Naive thymus-derived CD4-positive, alpha-beta T cell (primary cell): ENCODE measurements at regions of chr13 and their contacts with region 1.

Region 1: DNA sequence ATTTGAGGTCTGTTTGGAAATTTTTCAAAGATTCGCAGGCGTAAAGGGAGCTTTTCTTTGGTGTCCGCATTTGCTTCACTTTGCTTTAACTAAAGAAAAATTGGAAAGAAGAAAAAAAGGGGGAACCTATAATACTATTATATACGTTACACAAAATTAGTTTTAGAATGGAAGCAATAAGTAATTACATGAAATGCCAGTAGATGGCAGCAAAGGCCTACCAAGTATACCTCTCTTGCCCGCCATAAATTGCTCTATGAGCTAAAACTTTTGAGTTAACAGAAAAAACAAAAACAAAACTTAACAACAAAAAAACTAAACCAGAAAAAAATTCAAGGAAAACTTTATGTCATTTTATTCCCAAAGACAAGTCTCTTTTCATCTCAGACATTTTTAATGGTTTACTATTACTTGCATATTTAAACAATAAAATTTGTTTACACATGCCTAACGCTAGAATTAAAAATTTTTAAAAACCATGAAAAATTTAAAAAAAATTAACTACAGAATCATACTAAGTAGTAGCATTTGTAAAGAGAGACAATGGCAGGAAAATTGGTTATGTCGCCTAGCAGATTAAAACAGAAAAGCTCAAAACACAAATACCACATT is 271.4 kb downstream of the NALCN start:
- DNase-seq: peak in 7 of 9 donors; percentile 17 to 48 (median 33)
- ATAC-seq: peak; percentile 63
- H3K4me3 ChIP-seq: no peak overlapping the region
- H3K4me3 Mint-ChIP-seq: no peak overlapping the region
- H3K27ac ChIP-seq: no peak overlapping the region
- H3K27ac Mint-ChIP-seq: no peak overlapping the region
- H3K4me1 ChIP-seq: no peaks in the 10 kb centered on the region
- H3K4me1 Mint-ChIP-seq: no peaks in the 10 kb centered on the region
- H3K27me3 ChIP-seq: no peaks in the 10 kb centered on the region
- H3K27me3 Mint-ChIP-seq: peaks cover 7 to 48% (median 40%) of the 10 kb centered on the region in 5 donors

Region 2: GRCh38 chr13:100836702-100837101 is 308.2 kb before region 1 on chr13:
- CTCF ChIA-PET with region 1: no interaction called
- POLR2A ChIA-PET with region 1: no interaction called
- intact Hi-C with region 1: no loop called
- DNase-seq: no peak
- ATAC-seq: no peak
- H3K4me3 ChIP-seq: no peak overlapping the region
- H3K4me3 Mint-ChIP-seq: no peak overlapping the region
- H3K27ac ChIP-seq: no peak overlapping the region
- H3K27ac Mint-ChIP-seq: no peak overlapping the region
- H3K4me1 ChIP-seq: no peaks in the 10 kb centered on the region
- H3K4me1 Mint-ChIP-seq: no peaks in the 10 kb centered on the region
- H3K27me3 ChIP-seq: no peaks in the 10 kb centered on the region
- H3K27me3 Mint-ChIP-seq: peaks cover 2 to 14% (median 12%) of the 10 kb centered on the region in 5 donors

Region 3: DNA sequence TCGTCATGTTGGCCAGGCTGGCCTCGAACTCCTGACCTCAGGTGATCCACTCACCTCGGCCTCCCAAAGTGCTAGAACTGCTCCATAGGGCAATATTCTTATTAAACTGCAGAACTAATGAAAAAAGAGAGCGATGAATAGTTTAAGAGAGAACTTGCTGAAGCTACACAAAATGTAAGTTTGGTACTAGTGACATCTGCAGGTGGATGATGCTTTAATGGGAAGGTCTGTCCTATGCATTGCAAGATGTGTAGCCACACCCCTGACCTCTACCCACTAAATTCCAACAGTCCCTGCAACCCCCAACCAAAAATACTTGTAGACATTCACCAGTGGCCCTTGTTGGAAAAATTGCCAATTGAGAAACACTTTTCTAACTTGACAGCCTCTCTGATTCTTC is 153.6 kb after region 1 on chr13:
- CTCF ChIA-PET with region 1: no interaction called
- POLR2A ChIA-PET with region 1: no interaction called
- intact Hi-C with region 1: loop called (anchors 2 to 10 kb)
- DNase-seq: no peak
- ATAC-seq: no peak
- H3K4me3 ChIP-seq: no peak overlapping the region
- H3K4me3 Mint-ChIP-seq: no peak overlapping the region
- H3K27ac ChIP-seq: no peak overlapping the region
- H3K27ac Mint-ChIP-seq: no peak overlapping the region
- H3K4me1 ChIP-seq: no peaks in the 10 kb centered on the region
- H3K4me1 Mint-ChIP-seq: no peaks in the 10 kb centered on the region
- H3K27me3 ChIP-seq: no peaks in the 10 kb centered on the region
- H3K27me3 Mint-ChIP-seq: peaks cover 0 to 3% (median 0%) of the 10 kb centered on the region in 5 donors

Region 4: GRCh38 chr13:101757446-101758039 is 612.6 kb after region 1 on chr13:
- CTCF ChIA-PET with region 1: interaction called, 14 read pairs
- POLR2A ChIA-PET with region 1: no interaction called
- intact Hi-C with region 1: loop called (anchors 1 kb)
- DNase-seq: peak in 6 of 9 donors; percentile 2 to 39 (median 12)
- ATAC-seq: peak; percentile 49
- H3K4me3 ChIP-seq: no peak overlapping the region
- H3K4me3 Mint-ChIP-seq: no peak overlapping the region
- H3K27ac ChIP-seq: no peak overlapping the region
- H3K27ac Mint-ChIP-seq: no peak overlapping the region
- H3K4me1 ChIP-seq: no peaks in the 10 kb centered on the region
- H3K4me1 Mint-ChIP-seq: no peaks in the 10 kb centered on the region
- H3K27me3 ChIP-seq: no peaks in the 10 kb centered on the region
- H3K27me3 Mint-ChIP-seq: peaks cover 2 to 31% (median 20%) of the 10 kb centered on the region in 5 donors

Region 5: GRCh38 chr13:101942038-101942437 is 797.1 kb after region 1 on chr13:
- CTCF ChIA-PET with region 1: no interaction called
- POLR2A ChIA-PET with region 1: no interaction called
- intact Hi-C with region 1: loop called in 1 of 2 experiments (anchors 2 kb)
- DNase-seq: no peak
- ATAC-seq: no peak
- H3K4me3 ChIP-seq: no peak overlapping the region
- H3K4me3 Mint-ChIP-seq: no peak overlapping the region
- H3K27ac ChIP-seq: no peak overlapping the region
- H3K27ac Mint-ChIP-seq: no peak overlapping the region
- H3K4me1 ChIP-seq: no peaks in the 10 kb centered on the region
- H3K4me1 Mint-ChIP-seq: no peaks in the 10 kb centered on the region
- H3K27me3 ChIP-seq: no peaks in the 10 kb centered on the region
- H3K27me3 Mint-ChIP-seq: peaks cover 2 to 36% (median 19%) of the 10 kb centered on the region in 5 donors

Region 6: DNA sequence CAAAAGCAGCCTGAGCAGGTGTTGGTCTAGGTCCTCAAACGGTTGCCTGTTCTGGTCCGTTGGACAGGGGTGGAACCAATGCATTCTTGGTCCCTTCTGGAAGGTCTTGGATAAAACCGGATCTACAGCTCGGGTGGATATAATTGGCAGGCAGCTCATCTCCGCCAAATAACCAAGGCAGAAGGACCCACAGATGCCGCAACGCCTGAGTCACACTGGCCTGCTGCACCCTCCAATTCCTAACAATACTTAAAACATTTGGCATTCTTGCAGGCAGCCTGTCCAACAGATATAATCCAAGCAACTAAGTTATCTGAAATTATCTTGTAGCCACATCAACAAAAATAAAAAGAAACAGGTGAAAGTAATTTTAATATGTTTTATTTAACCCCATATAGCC is 1315.9 kb after region 1 on chr13:
- CTCF ChIA-PET with region 1: no interaction called
- POLR2A ChIA-PET with region 1: no interaction called
- intact Hi-C with region 1: loop called in 1 of 2 experiments (anchors 1 kb)
- DNase-seq: no peak
- ATAC-seq: no peak
- H3K4me3 ChIP-seq: no peak overlapping the region
- H3K4me3 Mint-ChIP-seq: no peak overlapping the region
- H3K27ac ChIP-seq: no peak overlapping the region
- H3K27ac Mint-ChIP-seq: no peak overlapping the region
- H3K4me1 ChIP-seq: no peaks in the 10 kb centered on the region
- H3K4me1 Mint-ChIP-seq: peaks cover 0 to 7% (median 5%) of the 10 kb centered on the region in 7 donors
- H3K27me3 ChIP-seq: no peaks in the 10 kb centered on the region
- H3K27me3 Mint-ChIP-seq: peaks cover 2 to 30% (median 17%) of the 10 kb centered on the region in 5 donors